ENCODE measurements at regions of chr1 and their contacts with region 1.

Region 1: GRCh38 chr1:172745014-172745413 is 86.1 kb downstream of the FASLG start:
- DNase-seq: no peak
- H3K4me3 Mint-ChIP-seq: no peak overlapping the region
- H3K27ac Mint-ChIP-seq: peak overlapping the region; percentile 18
- H3K4me1 Mint-ChIP-seq: peaks cover 26% of the 10 kb centered on the region
- H3K27me3 Mint-ChIP-seq: peaks cover 49% of the 10 kb centered on the region

Region 2: GRCh38 chr1:172818841-172819527 is 74.0 kb after region 1 on chr1:
- intact Hi-C with region 1: loop called (anchors 1 kb)
- DNase-seq: peak; percentile 33
- H3K4me3 Mint-ChIP-seq: peak overlapping the region; percentile 46
- H3K27ac Mint-ChIP-seq: peak overlapping the region; percentile 67
- H3K4me1 Mint-ChIP-seq: peaks cover 45% of the 10 kb centered on the region
- H3K27me3 Mint-ChIP-seq: peaks cover 15% of the 10 kb centered on the region

Region 3: GRCh38 chr1:172895050-172895460 is 150.0 kb after region 1 on chr1:
- intact Hi-C with region 1: loop called (anchors 1 kb)
- DNase-seq: peak; percentile 20
- H3K4me3 Mint-ChIP-seq: peak overlapping the region; percentile 59
- H3K27ac Mint-ChIP-seq: peak overlapping the region; percentile 0
- H3K4me1 Mint-ChIP-seq: peaks cover 39% of the 10 kb centered on the region
- H3K27me3 Mint-ChIP-seq: peaks cover 46% of the 10 kb centered on the region

Region 4: GRCh38 chr1:173195596-173196088 is 450.6 kb after region 1 on chr1:
- intact Hi-C with region 1: loop called (anchors 1 kb)
- DNase-seq: peak; percentile 12
- H3K4me3 Mint-ChIP-seq: no peak overlapping the region
- H3K27ac Mint-ChIP-seq: peak overlapping the region; percentile 57
- H3K4me1 Mint-ChIP-seq: peaks cover 17% of the 10 kb centered on the region
- H3K27me3 Mint-ChIP-seq: peaks cover 33% of the 10 kb centered on the region

Region 5: DNA sequence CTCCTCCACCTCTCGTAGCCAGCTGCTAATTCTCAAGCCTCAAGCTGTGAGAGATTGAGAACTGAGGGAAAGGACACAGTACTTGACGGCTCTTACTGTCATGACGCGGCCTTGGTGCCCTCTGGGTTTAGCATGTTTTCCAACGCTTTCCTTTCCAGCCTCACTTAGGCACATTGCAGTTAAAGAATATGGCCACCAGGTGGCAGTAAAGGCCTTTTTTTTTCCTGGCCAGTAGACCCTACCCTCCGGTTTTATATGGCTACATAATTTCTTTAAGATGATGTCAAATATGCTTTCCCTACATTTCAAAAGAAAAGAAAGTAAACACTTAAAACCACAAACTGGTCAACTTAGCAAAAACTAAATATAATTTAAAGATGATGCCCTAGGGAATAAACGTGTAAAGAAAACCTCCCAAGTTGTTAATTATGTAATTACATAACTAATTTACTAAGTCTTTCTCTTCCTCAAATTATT is 675.4 kb after region 1 on chr1:
- intact Hi-C with region 1: loop called (anchors 5 kb)
- DNase-seq: peak; percentile 55
- H3K4me3 Mint-ChIP-seq: no peak overlapping the region
- H3K27ac Mint-ChIP-seq: no peak overlapping the region
- H3K4me1 Mint-ChIP-seq: peaks cover 3% of the 10 kb centered on the region
- H3K27me3 Mint-ChIP-seq: no peaks in the 10 kb centered on the region

Region 6: DNA sequence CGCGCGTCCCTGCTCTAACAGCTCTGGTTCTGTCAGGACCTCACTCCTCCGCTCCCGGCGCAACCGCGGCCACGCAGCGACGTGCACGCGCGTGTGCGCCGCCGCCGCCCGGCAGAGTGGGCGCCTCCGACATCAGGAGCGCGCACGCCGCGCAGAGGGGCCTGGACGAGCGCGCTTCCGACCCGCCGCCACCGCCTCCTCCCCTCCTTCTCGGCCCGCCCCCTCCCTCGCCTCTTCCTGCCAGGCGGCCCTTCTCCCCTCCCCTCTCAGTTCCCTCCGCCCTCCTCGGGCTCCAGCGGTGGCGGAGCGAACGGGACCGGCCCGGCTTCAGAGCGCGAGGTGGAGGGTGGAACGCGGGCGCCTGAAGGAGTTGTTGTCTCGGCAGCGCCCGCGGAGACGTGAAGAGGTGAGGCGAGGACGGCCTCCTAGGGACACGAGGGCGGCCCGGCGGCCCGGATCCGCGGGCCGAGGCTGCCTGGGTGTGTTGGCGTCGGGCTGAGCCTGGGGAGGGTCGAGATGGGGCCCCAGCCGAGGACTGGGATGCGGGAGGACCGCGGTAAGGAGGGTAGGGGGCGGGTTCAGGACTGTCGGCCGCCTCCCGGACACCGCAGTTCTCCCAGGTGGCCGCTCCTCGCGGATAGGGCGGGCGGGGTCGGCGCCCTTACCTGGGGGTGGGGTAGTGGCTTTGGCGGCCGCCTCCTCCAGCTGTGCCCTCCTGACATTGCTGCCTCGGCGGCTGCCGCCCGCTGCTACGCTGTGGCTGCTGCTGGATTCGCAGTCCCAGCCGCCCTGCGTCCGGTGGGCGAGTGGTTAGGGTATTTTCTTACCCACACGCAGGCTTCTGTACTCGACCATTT is 1414.5 kb after region 1 on chr1 and contains the start of gene RABGAP1L:
- intact Hi-C with region 1: loop called (anchors 10 kb)
- DNase-seq: peak; percentile 91
- H3K4me3 Mint-ChIP-seq: peak within 1 kb of the TSS; percentile 99
- H3K27ac Mint-ChIP-seq: peak within 1 kb of the TSS; percentile 96
- H3K4me1 Mint-ChIP-seq: peaks cover 53% of the 10 kb centered on the region
- H3K27me3 Mint-ChIP-seq: no peaks in the 10 kb centered on the region
- total RNA-seq, gene RABGAP1L: 28.8 and 31.5 TPM in 2 replicates